ENCODE measurements at regions of chr3 and their contacts with region 1.

Region 1: DNA sequence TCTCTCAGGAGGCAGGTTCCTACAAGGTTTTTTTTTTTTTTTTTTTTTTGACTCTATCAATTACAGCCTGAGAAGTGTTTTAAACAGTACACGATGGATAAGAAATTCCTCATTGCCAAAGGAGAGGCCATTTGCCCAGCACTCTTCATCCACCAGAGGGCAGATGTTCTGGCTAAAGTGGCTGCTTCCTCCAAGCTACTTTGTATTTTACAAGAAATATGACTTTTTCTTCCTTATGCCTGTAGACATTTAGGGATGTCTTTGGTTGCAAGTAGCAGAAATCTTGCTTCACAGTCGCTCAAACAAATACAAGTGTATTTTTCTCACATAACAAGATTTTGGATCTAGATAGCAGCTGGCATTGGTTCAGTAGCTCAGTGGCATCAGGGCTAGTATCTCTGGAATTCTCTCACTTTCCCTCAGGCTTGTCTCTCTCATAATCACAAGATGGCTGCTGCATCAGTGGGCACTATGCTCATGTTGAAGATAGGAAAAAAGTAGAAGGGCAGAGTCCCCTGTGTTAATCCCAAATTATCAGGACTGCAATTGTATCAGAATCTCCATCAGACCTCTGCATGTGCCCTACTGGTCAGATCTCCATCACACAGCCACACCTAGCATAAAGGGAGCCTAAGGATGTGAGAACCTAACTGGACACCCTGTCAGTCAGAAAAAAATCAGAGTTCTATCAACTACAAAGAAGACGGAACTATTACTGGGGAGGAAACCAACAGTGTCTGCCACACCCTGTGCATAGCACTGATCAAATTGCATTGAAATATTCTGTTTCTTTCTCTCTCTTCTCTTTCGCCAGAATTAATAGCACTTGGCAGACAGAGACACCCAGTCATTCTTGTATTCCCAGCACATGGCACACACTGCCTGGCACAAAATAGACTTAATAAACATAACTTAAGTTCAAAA is 138.9 kb upstream of the COL8A1 start:
- DNase-seq: no peak
- H3K4me3 ChIP-seq: no peak overlapping the region
- H3K27ac ChIP-seq: no peak overlapping the region
- H3K4me1 ChIP-seq: no peaks in the 10 kb centered on the region
- H3K27me3 ChIP-seq: no peaks in the 10 kb centered on the region
- CTCF ChIP-seq: peak; percentile 33 to 80 (median 60)
- EP300 ChIP-seq: no peak
- POLR2A ChIP-seq: no peak
- RAD21 ChIP-seq: peak; percentile 58 to 68

Region 2: GRCh38 chr3:99471353-99472323 is 27.9 kb before region 1 on chr3:
- CTCF ChIA-PET with region 1: interaction called, 10 read pairs
- POLR2A ChIA-PET with region 1: no interaction called
- DNase-seq: no peak
- H3K4me3 ChIP-seq: no peak overlapping the region
- H3K27ac ChIP-seq: no peak overlapping the region
- H3K4me1 ChIP-seq: no peaks in the 10 kb centered on the region
- H3K27me3 ChIP-seq: peaks cover 0 to 1% (median 0%) of the 10 kb centered on the region in 4 experiments; a peak in 1 of 7 replicates
- CTCF ChIP-seq: no peak
- EP300 ChIP-seq: no peak
- POLR2A ChIP-seq: no peak
- RAD21 ChIP-seq: no peak

Region 3: GRCh38 chr3:99520513-99520912 is 21.0 kb after region 1 on chr3:
- CTCF ChIA-PET with region 1: interaction called, 27 read pairs
- POLR2A ChIA-PET with region 1: no interaction called
- DNase-seq: no peak
- H3K4me3 ChIP-seq: no peak overlapping the region
- H3K27ac ChIP-seq: no peak overlapping the region
- H3K4me1 ChIP-seq: no peaks in the 10 kb centered on the region
- H3K27me3 ChIP-seq: no peaks in the 10 kb centered on the region
- CTCF ChIP-seq: no peak
- EP300 ChIP-seq: no peak
- POLR2A ChIP-seq: no peak
- RAD21 ChIP-seq: no peak

Region 4: DNA sequence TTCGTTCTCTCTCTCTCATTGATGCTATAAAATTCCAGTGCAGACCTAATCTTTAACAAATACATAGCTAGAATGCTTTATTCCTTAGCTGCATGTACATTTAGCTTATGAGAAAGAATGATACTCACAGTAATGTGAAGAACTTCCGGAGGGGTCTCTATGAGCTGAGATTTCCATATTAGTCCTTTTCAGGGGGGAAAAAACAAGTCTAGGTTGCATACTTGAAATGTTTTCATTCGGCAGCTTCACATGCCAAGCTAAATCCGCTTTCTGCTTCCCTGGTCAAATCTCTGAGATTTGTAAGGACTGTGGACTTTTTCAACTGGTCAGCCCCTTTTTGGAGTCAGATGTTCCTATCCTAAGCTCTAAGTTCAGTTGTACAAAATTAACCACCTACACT is 27.4 kb after region 1 on chr3:
- CTCF ChIA-PET with region 1: interaction called, 27 read pairs
- POLR2A ChIA-PET with region 1: no interaction called
- DNase-seq: no peak
- H3K4me3 ChIP-seq: no peak overlapping the region
- H3K27ac ChIP-seq: no peak overlapping the region
- H3K4me1 ChIP-seq: peaks cover 0 to 6% (median 3%) of the 10 kb centered on the region in 4 experiments; a peak in 4 of 7 replicates
- H3K27me3 ChIP-seq: no peaks in the 10 kb centered on the region
- CTCF ChIP-seq: no peak
- EP300 ChIP-seq: no peak
- POLR2A ChIP-seq: no peak
- RAD21 ChIP-seq: no peak

Region 5: DNA sequence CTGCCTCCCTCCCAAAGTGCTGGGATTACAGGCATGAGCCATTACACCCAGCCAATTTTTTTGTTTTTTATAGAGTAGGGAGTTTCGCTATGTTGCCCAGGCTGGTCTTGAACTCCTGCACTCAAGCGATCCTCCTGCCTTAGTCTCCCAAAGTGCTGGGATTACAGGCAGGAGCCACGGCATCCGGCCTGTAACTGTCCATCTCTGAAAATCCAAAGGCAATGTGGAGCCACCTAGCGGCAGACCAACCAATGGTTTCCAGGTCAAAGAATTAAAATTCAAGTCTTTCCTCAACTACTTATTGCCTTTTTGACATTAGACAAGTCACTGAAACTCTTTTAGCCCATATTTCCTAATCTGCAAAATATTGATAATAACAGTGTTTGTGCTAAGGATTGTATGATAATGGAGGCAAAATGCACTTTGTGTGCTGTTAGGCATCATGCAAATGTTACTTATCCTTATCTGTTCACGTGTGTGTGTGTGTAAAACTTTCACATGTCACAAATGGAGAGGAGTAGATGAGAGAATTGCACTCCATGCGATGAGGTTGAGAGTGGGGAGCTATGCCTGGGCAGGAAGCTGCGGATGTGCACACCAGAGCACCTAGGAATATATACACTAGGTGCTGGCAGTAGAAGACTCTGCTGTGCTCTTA is 187.6 kb after region 1 on chr3:
- CTCF ChIA-PET with region 1: interaction called, 30 read pairs
- POLR2A ChIA-PET with region 1: no interaction called
- DNase-seq: peak in 1 of 2 experiments; percentile 84
- H3K4me3 ChIP-seq: no peak overlapping the region
- H3K27ac ChIP-seq: no peak overlapping the region
- H3K4me1 ChIP-seq: no peaks in the 10 kb centered on the region
- H3K27me3 ChIP-seq: peaks cover 0 to 1% (median 0%) of the 10 kb centered on the region in 4 experiments; a peak in 1 of 7 replicates
- CTCF ChIP-seq: peak; percentile 58 to 75 (median 74)
- EP300 ChIP-seq: no peak
- POLR2A ChIP-seq: no peak
- RAD21 ChIP-seq: peak; percentile 81 to 86